ENCODE measurements at regions of chr17 and their contacts with region 1.

Region 1: DNA sequence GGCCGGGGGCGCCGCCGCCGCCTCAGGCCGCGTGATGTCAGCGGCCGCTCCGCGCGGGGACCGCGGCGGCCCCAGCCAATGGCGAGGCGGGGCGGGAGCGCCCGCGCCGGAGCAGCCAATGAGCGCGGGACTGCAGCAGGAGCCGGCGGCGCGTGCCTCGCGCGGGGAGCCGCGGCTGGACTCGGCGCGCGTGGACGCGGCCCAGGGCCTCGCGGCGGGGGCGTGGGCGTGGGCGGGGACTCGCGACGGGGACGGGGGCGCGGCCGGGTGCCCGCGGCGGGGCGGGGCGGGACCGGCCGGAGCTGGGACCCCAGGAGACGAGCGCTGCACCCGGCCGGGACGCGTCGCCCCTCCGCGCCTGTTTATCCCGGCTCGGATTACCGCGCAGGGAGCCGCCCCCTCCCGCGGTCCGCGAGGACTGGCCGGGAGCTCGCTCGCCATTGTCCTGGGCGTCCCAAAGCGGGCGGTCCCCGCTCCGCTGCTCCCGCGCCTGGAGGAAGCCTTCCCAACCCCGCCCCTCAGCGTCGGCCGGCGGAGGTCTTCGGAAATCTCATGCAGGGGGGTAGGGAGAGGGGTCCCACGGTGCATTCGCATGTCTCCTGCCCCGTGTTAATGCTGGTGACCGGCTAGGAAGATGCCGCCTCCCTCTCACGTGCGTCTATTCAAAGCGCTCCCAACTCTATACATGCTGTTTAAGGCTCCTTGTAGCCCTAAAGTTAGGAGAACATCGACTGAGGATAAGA is at the start of gene RNF157:
- DNase-seq: peak; percentile 84
- ATAC-seq: peak; percentile 87
- H3K4me3 Mint-ChIP-seq: peak within 1 kb of the TSS; percentile 94
- H3K27ac Mint-ChIP-seq: peak within 1 kb of the TSS; percentile 96
- H3K4me1 Mint-ChIP-seq: peaks cover 62% of the 10 kb centered on the region
- H3K27me3 Mint-ChIP-seq: no peaks in the 10 kb centered on the region
- total RNA-seq, gene RNF157: 103 to 110 TPM

Region 2: GRCh38 chr17:76115138-76115754 is 125.4 kb before region 1 on chr17:
- POLR2A ChIA-PET with region 1: no interaction called
- DNase-seq: no peak
- ATAC-seq: no peak
- H3K4me3 Mint-ChIP-seq: no peak overlapping the region
- H3K27ac Mint-ChIP-seq: no peak overlapping the region
- H3K4me1 Mint-ChIP-seq: no peaks in the 10 kb centered on the region
- H3K27me3 Mint-ChIP-seq: peaks cover 2% of the 10 kb centered on the region

Region 3: GRCh38 chr17:76219670-76220383 is 20.8 kb before region 1 on chr17:
- POLR2A ChIA-PET with region 1: interaction called, 10 read pairs
- DNase-seq: no peak
- ATAC-seq: no peak
- H3K4me3 Mint-ChIP-seq: no peak overlapping the region
- H3K27ac Mint-ChIP-seq: no peak overlapping the region
- H3K4me1 Mint-ChIP-seq: peaks cover 26% of the 10 kb centered on the region
- H3K27me3 Mint-ChIP-seq: no peaks in the 10 kb centered on the region

Region 4: GRCh38 chr17:76255801-76256429 is 15.3 kb after region 1 on chr17:
- POLR2A ChIA-PET with region 1: interaction called, 1,721 read pairs
- DNase-seq: peak; percentile 34
- ATAC-seq: peak; percentile 2
- H3K4me3 Mint-ChIP-seq: peak overlapping the region; percentile 83
- H3K27ac Mint-ChIP-seq: peak overlapping the region; percentile 94
- H3K4me1 Mint-ChIP-seq: peaks cover 41% of the 10 kb centered on the region
- H3K27me3 Mint-ChIP-seq: no peaks in the 10 kb centered on the region

Measured in activated naive CD8-positive, alpha-beta T cell treated with anti-CD3 and anti-CD28 coated beads, Interleukin-2, amount 10 ng/mL, durations not matched to agents 7 days and 5 days (primary cell).